ENCODE measurements at regions of chr2 and their contacts with region 1.

Region 1: GRCh38 chr2:163132850-163133249 is 294.3 kb upstream of the KCNH7 start:
- ATAC-seq: no peak
- H3K4me3 ChIP-seq: no peak overlapping the region
- H3K27ac ChIP-seq: no peak overlapping the region
- H3K4me1 ChIP-seq: no peaks in the 10 kb centered on the region

Region 2: GRCh38 chr2:162890690-162891311 is 242.0 kb before region 1 on chr2:
- in situ Hi-C with region 1: loop called in 2 of 9 experiments (anchors 25 kb)
- ATAC-seq: peak in 3 of 8 experiments; percentile 71 to 83 (median 75)
- H3K4me3 ChIP-seq: no peak overlapping the region
- H3K27ac ChIP-seq: no peak overlapping the region
- H3K4me1 ChIP-seq: no peaks in the 10 kb centered on the region

Region 3: DNA sequence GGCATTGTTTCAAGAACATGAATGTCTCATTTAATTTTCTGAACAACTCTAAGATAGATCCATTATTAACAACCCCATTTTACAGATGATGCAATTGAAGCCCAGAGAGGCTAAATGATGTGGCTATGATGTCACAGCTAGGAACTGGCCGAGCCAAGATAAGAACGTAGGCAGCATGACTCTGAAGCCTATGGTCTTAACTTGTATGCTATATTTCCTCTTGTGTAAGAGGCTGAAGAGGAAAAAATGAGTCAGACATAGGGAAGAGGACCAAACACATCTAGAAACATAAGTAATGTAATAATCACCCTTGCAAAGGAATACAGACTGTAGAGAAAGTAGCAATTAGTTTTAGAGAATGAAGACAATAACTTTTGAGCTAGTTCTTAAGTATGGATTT is 186.2 kb after region 1 on chr2:
- in situ Hi-C with region 1: no loop called
- ATAC-seq: no peak
- H3K4me3 ChIP-seq: no peak overlapping the region
- H3K27ac ChIP-seq: no peak overlapping the region
- H3K4me1 ChIP-seq: no peaks in the 10 kb centered on the region

Region 4: DNA sequence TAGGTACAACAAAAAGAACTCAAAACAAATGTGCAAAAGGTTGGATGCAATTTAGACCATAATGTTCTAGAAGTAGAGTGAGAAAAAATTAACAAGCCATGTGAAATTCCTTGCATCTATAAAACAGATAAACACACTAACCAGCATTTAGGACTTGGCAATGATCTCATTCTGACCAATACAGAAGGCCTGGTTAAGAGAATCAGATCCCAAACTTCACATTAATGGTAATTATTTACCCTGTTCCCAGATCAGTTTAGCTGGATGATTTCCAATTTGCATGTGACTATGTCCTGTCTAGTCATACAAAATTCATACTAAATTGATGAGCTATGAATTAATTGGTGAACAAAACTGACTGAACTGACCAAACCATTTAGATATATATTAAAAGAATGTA is 701.4 kb after region 1 on chr2:
- in situ Hi-C with region 1: no loop called
- ATAC-seq: no peak
- H3K4me3 ChIP-seq: no peak overlapping the region
- H3K27ac ChIP-seq: no peak overlapping the region
- H3K4me1 ChIP-seq: no peaks in the 10 kb centered on the region

Region 5: GRCh38 chr2:164186591-164186990 is 1053.7 kb after region 1 on chr2:
- in situ Hi-C with region 1: no loop called
- ATAC-seq: no peak
- H3K4me3 ChIP-seq: no peak overlapping the region
- H3K27ac ChIP-seq: no peak overlapping the region
- H3K4me1 ChIP-seq: no peaks in the 10 kb centered on the region